HCT116 (cell line): ENCODE measurements at regions of chr2 and their contacts with region 1.

Region 1: GRCh38 chr2:143110758-143111428 is 18.3 kb upstream of the ARHGAP15 start:
- DNase-seq: peak; percentile 51
- ATAC-seq: peak; percentile 82
- H3K4me3 ChIP-seq: no peak overlapping the region
- H3K27ac ChIP-seq: no peak overlapping the region
- H3K4me1 ChIP-seq: no peaks in the 10 kb centered on the region
- H3K27me3 ChIP-seq: no peaks in the 10 kb centered on the region
- CTCF ChIP-seq: peak; percentile 60 to 83 (median 65); a peak in 5 of 6 replicates
- POLR2A ChIP-seq: no peak
- RAD21 ChIP-seq: peak; percentile 71

Region 2: GRCh38 chr2:142796161-142796560 is 314.7 kb before region 1 on chr2:
- CTCF ChIA-PET with region 1: no interaction called
- POLR2A ChIA-PET with region 1: no interaction called
- RAD21 ChIA-PET with region 1: no interaction called
- intact Hi-C with region 1: no loop called
- DNase-seq: no peak
- ATAC-seq: no peak
- H3K4me3 ChIP-seq: no peak overlapping the region
- H3K27ac ChIP-seq: no peak overlapping the region
- H3K4me1 ChIP-seq: no peaks in the 10 kb centered on the region
- H3K27me3 ChIP-seq: no peaks in the 10 kb centered on the region
- CTCF ChIP-seq: no peak
- POLR2A ChIP-seq: no peak
- RAD21 ChIP-seq: no peak

Region 3: GRCh38 chr2:143085125-143085784 is 25.6 kb before region 1 on chr2:
- CTCF ChIA-PET with region 1: no interaction called
- POLR2A ChIA-PET with region 1: no interaction called
- RAD21 ChIA-PET with region 1: no interaction called
- intact Hi-C with region 1: no loop called
- DNase-seq: no peak
- ATAC-seq: no peak
- H3K4me3 ChIP-seq: no peak overlapping the region
- H3K27ac ChIP-seq: no peak overlapping the region
- H3K4me1 ChIP-seq: no peaks in the 10 kb centered on the region
- H3K27me3 ChIP-seq: no peaks in the 10 kb centered on the region
- CTCF ChIP-seq: no peak
- POLR2A ChIP-seq: no peak
- RAD21 ChIP-seq: no peak

Region 4: GRCh38 chr2:143121079-143121478 is 10.2 kb after region 1 on chr2:
- CTCF ChIA-PET with region 1: interaction called, 5 read pairs
- POLR2A ChIA-PET with region 1: no interaction called
- RAD21 ChIA-PET with region 1: no interaction called
- intact Hi-C with region 1: loop called (anchors 1 kb)
- DNase-seq: no peak
- ATAC-seq: no peak
- H3K4me3 ChIP-seq: no peak overlapping the region
- H3K27ac ChIP-seq: no peak overlapping the region
- H3K4me1 ChIP-seq: no peaks in the 10 kb centered on the region
- H3K27me3 ChIP-seq: peaks cover 8% of the 10 kb centered on the region; the same call in 1 of the 2 replicates
- CTCF ChIP-seq: no peak
- POLR2A ChIP-seq: no peak
- RAD21 ChIP-seq: no peak

Region 5: DNA sequence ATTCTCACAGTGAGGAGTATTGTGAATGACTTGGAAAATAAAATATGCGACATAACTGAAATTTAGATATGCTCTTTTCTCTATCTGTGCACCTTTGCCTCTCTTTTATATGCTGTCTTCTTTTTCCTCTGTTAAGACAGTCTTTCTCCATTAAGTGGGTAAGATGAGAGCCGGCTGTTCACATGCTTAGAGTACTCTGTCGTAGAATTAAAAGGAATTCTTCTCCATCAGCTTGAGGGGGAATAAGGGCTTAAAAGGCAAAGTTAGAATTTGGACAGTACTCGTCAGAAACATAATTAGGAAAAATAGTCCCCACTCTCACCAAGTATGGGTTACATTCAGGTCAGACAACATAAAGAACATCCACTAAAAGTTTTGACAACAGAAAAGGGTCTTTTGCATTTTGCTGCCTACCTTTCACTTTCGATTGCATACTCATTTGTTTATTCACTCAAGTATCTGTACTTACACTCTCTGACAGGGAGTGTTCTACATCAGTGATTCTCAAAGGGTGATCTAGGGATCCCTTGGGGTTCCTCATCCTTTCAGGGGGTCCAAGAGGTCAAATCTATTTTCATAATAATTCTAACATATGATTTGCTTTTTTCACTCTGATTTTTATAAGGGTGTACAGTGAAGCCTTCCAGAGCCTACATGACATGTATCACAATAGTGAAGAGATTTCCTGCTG is 66.3 kb after region 1 on chr2:
- CTCF ChIA-PET with region 1: no interaction called
- POLR2A ChIA-PET with region 1: no interaction called
- RAD21 ChIA-PET with region 1: no interaction called
- intact Hi-C with region 1: no loop called
- DNase-seq: no peak
- ATAC-seq: no peak
- H3K4me3 ChIP-seq: no peak overlapping the region
- H3K27ac ChIP-seq: no peak overlapping the region
- H3K4me1 ChIP-seq: no peaks in the 10 kb centered on the region
- H3K27me3 ChIP-seq: no peaks in the 10 kb centered on the region; the same call in 1 of the 2 replicates
- CTCF ChIP-seq: no peak
- POLR2A ChIP-seq: no peak
- RAD21 ChIP-seq: no peak

Region 6: DNA sequence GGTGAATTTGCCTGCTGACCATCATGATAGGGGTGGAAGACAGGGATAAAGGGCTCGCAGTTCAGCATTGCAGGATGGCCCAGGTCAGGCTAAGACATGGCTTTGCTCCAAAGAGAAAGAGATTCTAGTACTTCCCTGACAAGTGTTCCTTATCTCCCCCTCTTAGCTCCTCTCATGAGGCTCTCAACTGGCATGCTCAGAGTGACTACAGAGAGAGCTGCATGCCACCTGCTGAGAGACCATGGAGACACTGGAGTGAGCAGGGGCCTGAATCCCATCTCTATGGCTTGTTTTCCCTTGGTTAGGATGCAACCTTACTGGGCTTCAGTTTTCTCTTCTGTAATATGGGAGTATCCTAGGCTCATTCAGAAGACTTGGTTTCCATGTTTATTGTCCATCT is 112.7 kb after region 1 on chr2:
- CTCF ChIA-PET with region 1: interaction called, 9 read pairs
- POLR2A ChIA-PET with region 1: no interaction called
- RAD21 ChIA-PET with region 1: no interaction called
- intact Hi-C with region 1: loop called (anchors 2 kb)
- DNase-seq: no peak
- ATAC-seq: no peak
- H3K4me3 ChIP-seq: no peak overlapping the region
- H3K27ac ChIP-seq: no peak overlapping the region
- H3K4me1 ChIP-seq: no peaks in the 10 kb centered on the region
- H3K27me3 ChIP-seq: peaks cover 5% of the 10 kb centered on the region; the same call in 1 of the 2 replicates
- CTCF ChIP-seq: no peak
- POLR2A ChIP-seq: no peak
- RAD21 ChIP-seq: no peak

Region 7: DNA sequence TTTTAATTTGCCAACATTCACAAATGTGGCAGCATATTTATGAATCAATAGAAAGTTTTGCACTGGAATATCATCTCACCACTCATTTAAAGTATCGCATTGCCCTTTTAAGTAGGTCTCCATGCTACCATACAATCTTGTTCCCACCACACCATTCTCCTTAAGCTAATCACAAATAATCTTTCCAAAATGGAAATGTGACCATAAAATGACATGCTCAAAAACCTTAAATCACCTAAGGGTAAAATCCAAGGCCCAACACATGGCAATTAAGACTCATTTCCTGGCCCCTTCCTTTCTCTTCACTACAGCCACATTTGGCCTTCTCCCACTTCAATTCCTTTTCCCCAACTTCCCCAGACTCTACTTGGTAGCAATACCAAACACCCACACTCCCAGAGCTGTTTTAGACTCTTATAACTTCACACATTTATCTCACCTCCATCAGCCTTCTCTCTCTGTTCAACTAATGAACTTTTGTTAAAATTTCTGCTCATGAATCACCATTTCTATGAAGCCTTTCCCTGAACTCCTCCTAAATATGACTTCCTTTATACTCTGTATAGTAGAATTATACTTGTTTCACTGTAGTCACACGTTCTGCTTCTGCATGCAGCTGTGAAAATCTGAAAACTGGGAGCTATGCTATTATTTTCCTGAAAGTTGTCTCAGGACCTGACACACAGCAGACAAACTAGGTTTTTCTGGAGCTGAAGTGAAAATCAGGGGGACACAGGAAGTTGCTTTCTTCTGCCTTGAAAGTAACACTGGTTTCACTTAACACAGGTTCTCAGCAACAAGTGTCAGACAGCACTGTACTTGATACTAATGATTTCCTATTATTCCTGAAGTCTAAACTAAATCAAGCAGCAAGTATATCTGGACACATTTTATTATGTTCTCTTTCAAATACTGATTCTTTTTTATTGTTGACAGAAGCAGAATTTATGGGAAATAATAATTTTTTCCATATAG is 1105.1 kb after region 1 on chr2:
- CTCF ChIA-PET with region 1: no interaction called
- POLR2A ChIA-PET with region 1: no interaction called
- RAD21 ChIA-PET with region 1: no interaction called
- intact Hi-C with region 1: no loop called
- DNase-seq: no peak
- ATAC-seq: no peak
- H3K4me3 ChIP-seq: no peak overlapping the region
- H3K27ac ChIP-seq: no peak overlapping the region
- H3K4me1 ChIP-seq: no peaks in the 10 kb centered on the region
- H3K27me3 ChIP-seq: no peaks in the 10 kb centered on the region
- CTCF ChIP-seq: no peak
- POLR2A ChIP-seq: no peak
- RAD21 ChIP-seq: no peak